ENCODE measurements at regions of chr3 and their contacts with region 1.

Region 1: DNA sequence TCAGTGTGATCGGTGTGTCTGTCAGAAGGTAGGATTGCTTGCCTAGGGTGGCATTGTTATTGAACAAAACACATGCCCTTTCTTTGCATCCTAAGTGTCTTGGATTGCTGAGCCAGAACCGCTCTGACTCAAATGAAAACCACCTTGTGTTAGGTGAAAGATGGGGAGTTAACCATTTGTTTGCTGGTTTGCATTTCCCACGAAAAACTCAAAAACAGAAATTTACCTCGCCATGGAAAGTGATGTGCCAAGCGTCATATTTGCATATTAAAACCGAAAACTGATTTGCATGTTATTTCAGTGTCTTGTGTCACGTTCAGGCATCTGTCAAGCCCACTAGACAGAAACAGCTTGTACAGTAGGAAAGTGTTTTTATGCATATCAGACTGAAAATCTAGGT is 474.6 kb upstream of the TPRG1 start:
- DNase-seq: no peak
- H3K4me3 Mint-ChIP-seq: no peak overlapping the region
- H3K27ac Mint-ChIP-seq: no peak overlapping the region
- H3K4me1 Mint-ChIP-seq: peaks cover 30% of the 10 kb centered on the region
- H3K27me3 Mint-ChIP-seq: peaks cover 2% of the 10 kb centered on the region

Region 2: GRCh38 chr3:188720636-188721035 is 23.5 kb after region 1 on chr3:
- intact Hi-C with region 1: loop called (anchors 1 kb)
- DNase-seq: no peak
- H3K4me3 Mint-ChIP-seq: no peak overlapping the region
- H3K27ac Mint-ChIP-seq: no peak overlapping the region
- H3K4me1 Mint-ChIP-seq: peaks cover 27% of the 10 kb centered on the region
- H3K27me3 Mint-ChIP-seq: no peaks in the 10 kb centered on the region

Region 3: DNA sequence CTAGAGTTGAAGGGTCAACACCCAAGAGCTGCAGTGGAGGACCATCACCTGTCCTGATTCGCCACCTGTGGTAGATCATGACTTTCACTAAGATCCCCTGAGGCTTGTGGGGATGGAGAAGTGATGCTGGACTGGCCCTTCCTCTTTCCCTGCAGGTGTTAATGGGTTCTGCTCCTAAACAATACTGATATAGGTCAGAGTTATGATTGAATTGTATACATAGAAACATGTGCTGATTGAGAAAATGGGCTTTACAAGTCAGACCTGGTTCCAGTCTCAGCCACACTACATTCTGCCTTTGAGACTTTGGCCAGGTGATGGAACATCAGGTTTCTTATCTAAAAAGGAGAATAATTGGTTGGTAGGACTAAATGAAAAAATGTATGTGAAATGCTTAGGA is 55.7 kb after region 1 on chr3:
- intact Hi-C with region 1: loop called (anchors 2 kb)
- DNase-seq: no peak
- H3K4me3 Mint-ChIP-seq: no peak overlapping the region
- H3K27ac Mint-ChIP-seq: no peak overlapping the region
- H3K4me1 Mint-ChIP-seq: peaks cover 19% of the 10 kb centered on the region
- H3K27me3 Mint-ChIP-seq: peaks cover 3% of the 10 kb centered on the region

Region 4: GRCh38 chr3:189167027-189167766 is 470.1 kb after region 1 on chr3:
- intact Hi-C with region 1: no loop called
- DNase-seq: no peak
- H3K4me3 Mint-ChIP-seq: no peak overlapping the region
- H3K27ac Mint-ChIP-seq: no peak overlapping the region
- H3K4me1 Mint-ChIP-seq: peaks cover 3% of the 10 kb centered on the region
- H3K27me3 Mint-ChIP-seq: peaks cover 3% of the 10 kb centered on the region